ENCODE measurements at regions of chr5 and their contacts with region 1.

Region 1: DNA sequence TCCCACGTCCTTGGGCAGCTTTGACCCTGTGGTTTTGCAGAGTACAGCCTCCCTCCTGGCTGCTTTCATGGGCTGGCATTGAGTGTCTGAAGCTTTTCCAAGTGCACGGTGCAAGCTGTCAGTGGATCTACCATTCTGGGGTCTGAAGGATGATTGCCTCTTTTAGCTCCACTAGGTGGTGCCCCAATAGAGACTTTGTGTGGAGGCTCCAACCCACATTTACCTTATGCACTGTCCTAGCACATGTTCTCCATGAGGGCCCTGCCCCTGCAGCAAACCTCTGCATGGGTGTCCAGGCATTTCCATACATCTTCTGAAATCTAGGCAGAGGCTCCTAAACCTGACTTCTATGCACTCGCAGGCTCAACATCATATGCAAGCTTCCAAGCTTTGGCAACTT is 644.2 kb upstream of the CDH9 start:
- DNase-seq: no peak

Region 2: GRCh38 chr5:28779161-28779754 is 1096.7 kb after region 1 on chr5:
- intact Hi-C with region 1: loop called in 1 of 2 experiments (anchors 5 kb)
- DNase-seq: no peak

Measured in posterior vena cava (tissue), 2 donors.